ENCODE measurements at regions of chr15 and their contacts with region 1.

Region 1: GRCh38 chr15:91981821-91982801 is 128.6 kb downstream of the SLCO3A1 start:
- DNase-seq: no peak
- H3K4me3 ChIP-seq: no peak overlapping the region
- H3K27ac ChIP-seq: no peak overlapping the region
- H3K4me1 ChIP-seq: peaks cover 12% of the 10 kb centered on the region
- H3K27me3 ChIP-seq: no peaks in the 10 kb centered on the region
- CTCF ChIP-seq: no peak
- EP300 ChIP-seq: no peak
- POLR2A ChIP-seq: no peak

Region 2: DNA sequence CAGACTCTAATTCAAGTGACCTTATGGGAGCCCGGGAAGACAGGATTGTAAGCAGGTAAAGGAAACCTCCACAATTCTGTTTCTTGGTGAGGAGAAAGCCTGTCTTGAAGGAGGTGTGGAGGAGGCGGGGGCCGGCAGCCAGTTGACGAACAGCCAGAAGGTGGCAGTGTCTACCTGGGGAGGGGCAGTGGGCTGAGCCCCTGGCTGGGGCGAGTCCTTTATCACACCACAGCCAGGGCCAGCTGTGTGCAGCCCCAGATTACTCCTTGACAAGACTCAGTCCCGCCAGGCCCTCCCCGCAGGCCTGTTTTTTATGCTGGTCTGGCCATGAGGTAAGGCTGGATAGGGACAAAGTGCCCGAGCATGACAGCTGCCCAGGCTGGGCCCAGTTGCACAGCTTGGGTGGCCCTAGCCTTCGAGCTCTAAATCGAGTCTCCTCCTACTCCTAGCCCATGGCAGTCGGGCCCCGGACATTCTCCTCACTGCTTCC is 1838.9 kb before region 1 on chr15:
- intact Hi-C with region 1: no loop called
- DNase-seq: peak in 3 of 5 donors; percentile 28 to 57 (median 52)
- H3K4me3 ChIP-seq: no peak overlapping the region
- H3K27ac ChIP-seq: no peak overlapping the region
- H3K4me1 ChIP-seq: peaks cover 1% of the 10 kb centered on the region
- H3K27me3 ChIP-seq: no peaks in the 10 kb centered on the region
- CTCF ChIP-seq: no peak
- EP300 ChIP-seq: no peak
- POLR2A ChIP-seq: no peak

Region 3: GRCh38 chr15:92069308-92070250 is 87.5 kb after region 1 on chr15:
- intact Hi-C with region 1: loop called in 1 of 4 experiments (anchors 10 kb)
- DNase-seq: no peak
- H3K4me3 ChIP-seq: no peak overlapping the region
- H3K27ac ChIP-seq: no peak overlapping the region
- H3K4me1 ChIP-seq: peaks cover 4% of the 10 kb centered on the region
- H3K27me3 ChIP-seq: no peaks in the 10 kb centered on the region
- CTCF ChIP-seq: no peak
- EP300 ChIP-seq: no peak
- POLR2A ChIP-seq: no peak